Vagina (tissue), 2 donors: ENCODE measurements at regions of chr9 and their contacts with region 1.

Region 1: DNA sequence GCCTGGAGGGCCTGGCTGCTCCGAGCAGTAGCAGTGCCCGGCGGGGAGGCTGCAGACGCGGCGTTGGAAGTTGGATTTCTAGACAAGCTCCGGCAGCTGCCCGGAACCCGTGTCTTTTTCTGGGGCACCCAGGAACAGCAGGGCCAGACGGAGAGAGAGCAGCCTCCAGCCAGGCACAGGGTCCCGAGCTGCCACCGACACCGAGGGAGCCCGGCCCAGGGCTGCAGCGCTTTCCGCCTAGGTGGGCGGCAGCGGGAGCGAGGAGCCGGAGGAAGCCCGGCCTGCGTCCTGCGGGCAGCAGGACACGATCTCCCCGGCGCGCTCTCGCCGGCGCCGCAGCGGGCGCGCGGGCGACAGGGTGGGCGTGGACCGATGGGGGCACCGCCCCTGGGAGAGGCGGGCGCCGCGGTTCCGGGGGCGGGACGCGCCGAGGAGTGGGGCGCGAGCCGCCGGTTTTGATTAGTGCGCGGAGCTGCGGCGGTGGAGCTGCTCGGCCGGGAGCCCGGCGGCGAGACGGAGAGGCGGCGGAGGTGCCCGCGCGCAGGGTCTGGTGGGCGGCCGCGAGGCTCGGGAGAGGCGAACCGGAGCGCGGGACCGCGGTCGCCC is at the start of gene UGCG:
- DNase-seq: peak in 1 of 2 donors; percentile 89
- H3K4me3 ChIP-seq: peak within 1 kb of the TSS; percentile 95 to 99
- H3K27ac ChIP-seq: peak within 1 kb of the TSS; percentile 97
- H3K4me1 ChIP-seq: peaks cover 29% of the 10 kb centered on the region
- H3K27me3 ChIP-seq: no peaks in the 10 kb centered on the region
- CTCF ChIP-seq: peak in 1 of 3 experiments; percentile 16
- POLR2A ChIP-seq: peak; percentile 40 to 93
- total RNA-seq, gene UGCG: 33.1 TPM

Region 2: DNA sequence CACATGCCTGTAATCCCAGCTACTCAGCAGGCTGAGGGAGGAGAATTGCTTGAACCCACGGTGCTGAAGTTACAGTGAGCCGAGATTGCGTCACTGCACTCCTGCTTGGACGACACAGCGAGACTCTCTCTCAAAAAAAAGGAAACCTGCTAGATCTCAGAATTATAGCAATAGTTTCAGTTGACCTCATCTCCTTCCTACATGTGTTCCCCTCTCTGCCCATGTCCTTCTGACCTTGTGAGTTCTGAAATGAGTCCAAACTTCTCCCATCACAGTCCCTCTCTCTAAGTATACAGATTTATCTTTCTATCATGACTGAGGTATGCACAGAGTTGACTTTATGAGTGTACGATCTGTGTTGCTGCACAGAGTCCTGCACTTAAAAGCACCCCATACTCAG is 57.1 kb before region 1 on chr9:
- intact Hi-C with region 1: no loop called
- DNase-seq: no peak
- H3K4me3 ChIP-seq: no peak overlapping the region
- H3K27ac ChIP-seq: peak overlapping the region; percentile 56
- H3K4me1 ChIP-seq: peaks cover 21% of the 10 kb centered on the region
- H3K27me3 ChIP-seq: no peaks in the 10 kb centered on the region
- CTCF ChIP-seq: no peak
- POLR2A ChIP-seq: no peak

Region 3: DNA sequence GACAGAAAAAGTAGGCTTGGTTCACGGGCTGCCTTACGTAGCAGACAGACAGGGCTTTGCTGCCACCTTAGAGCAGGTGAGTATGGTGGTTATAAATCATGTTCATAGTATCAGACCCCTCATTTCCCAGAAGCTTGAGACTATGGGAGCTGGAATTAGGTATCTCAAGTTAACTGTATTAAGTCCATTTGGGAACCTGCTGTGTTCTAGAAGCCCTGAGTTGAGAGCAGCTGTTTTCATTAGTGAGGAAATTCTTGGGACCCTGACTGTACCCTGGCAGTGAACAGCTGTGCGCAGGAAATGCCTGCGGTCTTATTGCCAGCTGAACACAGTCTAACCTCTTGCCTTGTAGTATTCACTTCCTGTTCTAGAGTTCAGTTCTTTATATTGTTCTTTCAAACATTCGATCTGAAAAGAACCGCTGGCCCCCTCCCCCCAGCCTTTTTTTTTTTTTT is 30.0 kb after region 1 on chr9:
- intact Hi-C with region 1: no loop called
- DNase-seq: no peak
- H3K4me3 ChIP-seq: no peak overlapping the region
- H3K27ac ChIP-seq: no peak overlapping the region
- H3K4me1 ChIP-seq: peaks cover 12% of the 10 kb centered on the region
- H3K27me3 ChIP-seq: no peaks in the 10 kb centered on the region
- CTCF ChIP-seq: no peak
- POLR2A ChIP-seq: no peak

Region 4: GRCh38 chr9:112074250-112075008 is 178.0 kb after region 1 on chr9:
- intact Hi-C with region 1: loop called (anchors 2 kb)
- DNase-seq: no peak
- H3K4me3 ChIP-seq: no peak overlapping the region
- H3K27ac ChIP-seq: peak overlapping the region; percentile 64
- H3K4me1 ChIP-seq: peaks cover 17% of the 10 kb centered on the region
- H3K27me3 ChIP-seq: no peaks in the 10 kb centered on the region
- CTCF ChIP-seq: peak; percentile 91 to 97 (median 93)
- POLR2A ChIP-seq: no peak

Region 5: GRCh38 chr9:112333639-112334431 is 437.4 kb after region 1 on chr9:
- intact Hi-C with region 1: loop called (anchors 10 kb)
- DNase-seq: peak in 1 of 2 donors; percentile 92
- H3K4me3 ChIP-seq: peak overlapping the region; percentile 77 to 81
- H3K27ac ChIP-seq: peak overlapping the region; percentile 99
- H3K4me1 ChIP-seq: peaks cover 31% of the 10 kb centered on the region
- H3K27me3 ChIP-seq: no peaks in the 10 kb centered on the region
- CTCF ChIP-seq: peak in 2 of 3 experiments; percentile 58 to 71
- POLR2A ChIP-seq: peak in 1 of 2 donors; percentile 6